ENCODE measurements at regions of chr1 and their contacts with region 1.

Region 1: DNA sequence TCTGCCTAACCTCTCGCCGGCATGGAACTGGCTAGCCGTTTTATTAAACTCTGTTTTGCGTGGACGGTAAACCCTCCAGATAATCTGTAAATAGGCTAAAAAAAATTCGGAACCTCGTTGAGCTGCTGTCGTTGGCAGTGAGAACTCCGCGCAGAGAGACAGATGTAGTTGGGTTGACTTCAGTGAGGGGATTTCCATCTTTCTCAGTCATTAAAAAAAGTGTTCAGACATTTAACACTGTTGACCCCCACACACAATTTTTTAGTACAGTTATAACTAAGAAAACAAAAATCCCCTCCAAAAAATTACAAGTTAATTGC is 465 bp downstream of the PARK7 start:
- DNase-seq: no peak
- ATAC-seq: no peak
- H3K4me3 Mint-ChIP-seq: peak overlapping the region; percentile 100
- H3K27ac Mint-ChIP-seq: peak overlapping the region; percentile 80
- H3K4me1 Mint-ChIP-seq: peaks cover 11% of the 10 kb centered on the region; the same call in 1 of the 2 replicates
- H3K27me3 Mint-ChIP-seq: peaks cover 4% of the 10 kb centered on the region; the same call in 1 of the 2 replicates
- CTCF ChIP-seq: no peak

Region 2: DNA sequence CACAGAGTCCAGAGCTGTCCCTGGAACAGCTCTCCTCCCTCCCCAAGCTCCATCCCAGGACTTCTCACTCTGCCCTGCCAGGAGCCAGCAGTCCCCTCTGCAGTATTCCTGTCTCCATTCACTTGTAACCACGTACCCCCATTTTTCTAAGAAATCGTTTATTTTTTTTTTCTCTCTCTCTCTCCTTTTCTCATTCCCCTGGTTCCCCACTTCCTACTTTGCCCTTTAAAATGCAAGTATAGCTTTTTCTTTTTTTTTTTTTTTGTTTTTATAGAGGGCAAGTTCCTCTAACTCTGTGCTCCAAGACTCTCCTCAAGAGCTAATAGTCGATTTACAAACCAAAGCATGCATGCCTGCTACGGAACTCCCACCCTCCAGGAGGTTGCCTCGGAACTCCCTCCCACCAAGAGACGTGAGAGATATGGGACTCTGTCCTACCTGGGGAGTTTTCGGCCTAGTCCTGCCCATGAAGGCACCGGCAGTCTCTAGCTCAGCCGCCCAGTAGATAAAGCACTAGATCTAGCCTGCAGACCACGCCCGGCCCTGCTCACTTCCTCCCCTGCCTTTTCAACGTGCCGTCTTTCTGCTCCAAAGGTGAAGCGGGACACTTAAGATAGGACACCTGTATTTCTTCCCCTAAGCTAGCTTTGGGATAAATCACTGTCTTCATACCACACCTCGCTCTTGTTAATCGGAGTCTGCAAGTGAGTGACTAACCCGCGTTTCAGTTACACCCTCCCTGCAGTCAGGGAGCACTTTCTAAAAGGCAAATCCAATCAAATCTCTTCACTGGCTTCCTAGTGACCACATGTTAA is 49.0 kb before region 1 on chr1:
- CTCF ChIA-PET with region 1: no interaction called
- POLR2A ChIA-PET with region 1: no interaction called
- DNase-seq: no peak
- ATAC-seq: peak; percentile 57
- H3K4me3 Mint-ChIP-seq: peak overlapping the region; percentile 11
- H3K27ac Mint-ChIP-seq: no peak overlapping the region
- H3K4me1 Mint-ChIP-seq: peaks cover 24% of the 10 kb centered on the region
- H3K27me3 Mint-ChIP-seq: no peaks in the 10 kb centered on the region; the same call in 1 of the 2 replicates
- CTCF ChIP-seq: no peak

Region 3: DNA sequence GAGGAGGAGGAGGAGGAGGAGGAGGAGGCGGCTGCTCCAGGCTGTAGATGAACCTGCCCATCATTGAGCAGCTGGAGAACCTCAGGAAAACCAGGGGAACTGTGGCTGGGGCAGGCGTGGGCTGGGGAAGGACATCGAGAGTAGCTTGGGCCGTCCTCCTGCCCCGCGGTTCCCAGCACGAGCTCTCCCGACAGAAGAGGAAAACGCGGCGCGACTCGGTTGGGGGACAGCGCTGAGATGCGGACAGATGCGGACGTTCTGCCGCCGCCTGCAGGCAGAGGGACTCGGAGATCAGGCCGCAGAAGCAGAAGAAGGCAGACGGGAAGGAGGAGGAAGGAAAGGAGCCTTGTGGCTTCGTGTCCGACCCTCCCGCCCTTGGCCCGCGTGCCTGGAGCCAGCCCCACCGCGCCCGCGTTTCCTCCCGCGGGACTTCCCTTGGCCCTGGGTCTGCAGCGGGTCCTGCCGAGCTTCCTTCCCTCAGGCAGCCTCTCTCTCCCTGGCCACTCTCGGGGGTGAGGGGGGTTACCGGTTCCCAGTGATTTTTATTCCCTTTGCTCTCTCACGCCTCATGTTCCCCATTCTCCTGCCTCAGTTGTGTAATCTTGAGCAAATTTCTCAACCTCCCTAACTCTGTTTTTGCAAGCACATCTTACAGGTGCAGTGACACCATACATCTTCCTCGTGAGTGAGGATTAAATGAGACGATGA is 19.6 kb before region 1 on chr1:
- CTCF ChIA-PET with region 1: no interaction called
- POLR2A ChIA-PET with region 1: no interaction called
- DNase-seq: peak; percentile 78
- ATAC-seq: peak; percentile 95
- H3K4me3 Mint-ChIP-seq: peak overlapping the region; percentile 54
- H3K27ac Mint-ChIP-seq: no peak overlapping the region
- H3K4me1 Mint-ChIP-seq: peaks cover 16% of the 10 kb centered on the region
- H3K27me3 Mint-ChIP-seq: peaks cover 63% of the 10 kb centered on the region
- CTCF ChIP-seq: no peak

Region 4: DNA sequence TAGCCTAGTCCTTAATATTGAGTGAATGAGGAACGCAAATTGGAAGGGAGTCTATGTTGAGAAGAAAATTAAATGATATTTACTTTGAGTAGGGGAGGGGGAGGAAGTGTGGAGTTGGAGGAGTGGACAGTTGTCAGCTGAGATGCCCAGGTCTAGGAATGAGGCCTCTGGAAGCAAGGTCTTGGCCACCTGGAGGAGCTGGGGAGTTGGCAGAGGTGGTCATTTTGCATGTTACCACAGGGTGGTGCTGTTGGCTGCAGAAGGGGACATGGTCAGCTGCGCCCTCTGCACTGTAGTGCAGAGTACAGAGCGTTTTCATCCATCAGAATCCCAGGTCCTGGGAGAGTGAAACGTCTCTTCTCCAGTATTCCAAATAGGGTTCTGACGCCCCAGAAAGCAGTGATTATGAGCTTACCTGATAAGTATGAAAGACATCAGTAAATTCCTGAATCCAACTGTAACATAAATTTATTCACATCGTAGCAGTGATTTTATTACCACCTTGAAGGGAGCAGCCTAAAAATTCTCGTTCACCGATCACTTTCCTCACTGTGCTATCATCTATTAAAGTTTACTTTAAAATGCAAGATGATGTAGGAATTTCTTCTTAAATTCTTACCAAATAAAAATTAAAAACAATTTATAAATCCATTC is 13.4 kb after region 1 on chr1:
- CTCF ChIA-PET with region 1: interaction called, 10 read pairs
- POLR2A ChIA-PET with region 1: interaction called, 3 read pairs
- DNase-seq: peak; percentile 89
- ATAC-seq: peak; percentile 100
- H3K4me3 Mint-ChIP-seq: no peak overlapping the region
- H3K27ac Mint-ChIP-seq: no peak overlapping the region
- H3K4me1 Mint-ChIP-seq: 0 out of 2 replicates have a peak, but pooled peaks cover 2% of the 10 kb centered on the region
- H3K27me3 Mint-ChIP-seq: no peaks in the 10 kb centered on the region
- CTCF ChIP-seq: peak; percentile 88